ENCODE measurements at regions of chr6 and their contacts with region 1.

Region 1: DNA sequence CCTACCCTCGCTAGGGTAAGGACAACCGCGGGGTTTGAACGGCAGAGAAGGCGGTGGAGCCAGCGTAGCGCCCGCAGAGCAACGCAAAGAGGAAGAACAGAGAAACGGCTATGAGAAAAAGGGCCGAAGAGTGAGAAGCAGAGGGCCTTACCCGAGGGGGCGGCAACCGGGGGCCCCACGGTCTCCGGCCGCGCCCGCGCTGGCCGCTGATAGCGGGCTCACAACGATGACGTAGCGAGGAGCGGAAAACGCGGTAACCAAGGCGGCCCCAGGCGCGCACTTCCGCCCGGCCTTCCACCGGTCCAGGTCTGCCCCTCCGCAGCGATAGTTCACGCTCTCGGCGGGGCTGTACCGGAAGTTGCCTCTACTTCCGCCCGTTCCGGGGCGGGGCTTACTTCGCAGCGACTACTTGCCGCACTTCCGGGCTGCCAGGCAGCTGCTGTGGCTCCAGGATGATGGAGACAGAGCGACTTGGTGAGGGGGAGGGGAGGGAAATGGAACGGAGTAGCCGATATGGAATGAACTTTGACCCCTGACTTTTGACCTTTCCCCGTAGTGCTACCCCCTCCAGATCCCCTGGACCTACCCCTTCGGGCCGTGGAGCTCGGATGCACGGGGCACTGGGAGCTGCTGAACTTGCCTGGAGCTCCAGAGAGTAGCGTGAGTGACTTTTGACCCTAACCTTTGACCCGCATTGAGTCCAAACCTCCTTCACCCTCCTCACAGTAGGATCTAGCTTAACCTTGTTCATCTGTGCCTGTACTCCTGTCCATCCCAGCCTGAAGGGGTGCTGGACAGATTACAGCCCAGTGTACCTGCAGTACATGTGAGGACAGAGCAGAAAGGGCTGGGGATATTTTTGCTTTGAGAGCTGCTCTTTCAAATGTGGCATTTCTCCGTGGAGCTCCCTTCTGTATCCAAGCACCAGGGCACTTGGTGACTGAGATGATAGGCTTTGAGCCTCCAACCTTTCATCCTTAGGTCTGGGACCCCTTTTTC is at the starts of genes NELFE and SKIC2:
- DNase-seq: peak; percentile 100
- H3K4me3 Mint-ChIP-seq: peak within 1 kb of the TSS; percentile 97
- H3K27ac Mint-ChIP-seq: peak within 1 kb of the TSS; percentile 97
- H3K4me1 Mint-ChIP-seq: peaks cover 15% of the 10 kb centered on the region
- H3K27me3 Mint-ChIP-seq: no peaks in the 10 kb centered on the region
- CTCF ChIP-seq: no peak
- total RNA-seq, gene NELFE: 141 and 157 TPM in 2 replicates
- total RNA-seq, gene SKIC2: 182 and 201 TPM in 2 replicates

Region 2: DNA sequence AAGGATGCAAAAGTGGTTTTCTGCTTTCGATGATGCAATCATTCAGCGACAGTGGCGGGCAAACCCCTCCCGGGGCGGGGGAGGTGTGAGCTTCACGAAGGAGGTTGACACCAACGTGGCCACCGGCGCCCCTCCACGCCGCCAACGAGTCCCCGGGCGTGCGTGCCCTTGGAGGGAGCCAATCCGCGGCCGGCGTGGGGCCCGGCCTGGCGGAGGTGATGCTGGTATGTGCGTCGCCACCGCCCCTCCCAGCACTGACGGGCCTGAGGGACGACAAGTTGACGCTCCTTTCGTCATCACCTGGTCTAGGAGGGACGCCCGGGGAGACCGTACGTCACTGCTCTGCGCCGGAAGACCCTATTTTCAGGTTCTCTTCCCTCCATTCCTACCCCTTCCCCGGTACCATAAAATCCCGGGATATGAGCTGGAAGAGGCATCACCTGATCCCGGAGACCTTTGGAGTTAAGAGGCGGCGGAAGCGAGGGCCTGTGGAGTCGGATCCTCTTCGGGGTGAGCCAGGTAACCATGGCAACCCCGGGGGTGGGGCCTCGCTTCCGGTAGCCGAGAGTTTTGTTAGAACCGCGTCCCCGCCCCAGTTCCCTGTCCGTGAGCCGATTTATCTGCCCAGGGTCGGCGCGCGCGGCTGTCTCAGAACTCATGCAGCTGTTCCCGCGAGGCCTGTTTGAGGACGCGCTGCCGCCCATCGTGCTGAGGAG is 13.1 kb after region 1 on chr6 and contains the start of gene DXO:
- CTCF ChIA-PET with region 1: interaction called, 14 read pairs
- intact Hi-C with region 1: no loop called
- DNase-seq: peak; percentile 99
- H3K4me3 Mint-ChIP-seq: peak within 1 kb of the TSS; percentile 86
- H3K27ac Mint-ChIP-seq: peak within 1 kb of the TSS; percentile 98
- H3K4me1 Mint-ChIP-seq: peaks cover 27% of the 10 kb centered on the region
- H3K27me3 Mint-ChIP-seq: no peaks in the 10 kb centered on the region
- CTCF ChIP-seq: no peak
- total RNA-seq, gene DXO: 40.9 and 43.6 TPM in 2 replicates

Region 3: GRCh38 chr6:32177788-32178546 is 218.9 kb after region 1 on chr6 and contains the start of gene RNF5:
- CTCF ChIA-PET with region 1: no interaction called
- intact Hi-C with region 1: loop called (anchors 5 kb)
- DNase-seq: peak; percentile 99
- H3K4me3 Mint-ChIP-seq: peak within 1 kb of the TSS; percentile 82
- H3K27ac Mint-ChIP-seq: peak within 1 kb of the TSS; percentile 62
- H3K4me1 Mint-ChIP-seq: peaks cover 43% of the 10 kb centered on the region
- H3K27me3 Mint-ChIP-seq: no peaks in the 10 kb centered on the region
- CTCF ChIP-seq: no peak
- total RNA-seq, gene RNF5: 85.4 and 89.6 TPM in 2 replicates